ENCODE measurements at regions of chr3 and their contacts with region 1.

Region 1: GRCh38 chr3:44510000-44510368 is 32.5 kb upstream of the ZNF445 start:
- DNase-seq: no peak
- H3K4me3 Mint-ChIP-seq: peak overlapping the region; percentile 88
- H3K27ac Mint-ChIP-seq: peak overlapping the region; percentile 79
- H3K4me1 Mint-ChIP-seq: peaks cover 24% of the 10 kb centered on the region
- H3K27me3 Mint-ChIP-seq: no peaks in the 10 kb centered on the region

Region 2: GRCh38 chr3:44323341-44323955 is 186.5 kb before region 1 on chr3:
- intact Hi-C with region 1: loop called (anchors 5 kb)
- DNase-seq: peak; percentile 85
- H3K4me3 Mint-ChIP-seq: no peak overlapping the region
- H3K27ac Mint-ChIP-seq: no peak overlapping the region
- H3K4me1 Mint-ChIP-seq: no peaks in the 10 kb centered on the region
- H3K27me3 Mint-ChIP-seq: peaks cover 31% of the 10 kb centered on the region

Region 3: GRCh38 chr3:44439499-44440295 is 70.3 kb before region 1 on chr3:
- intact Hi-C with region 1: loop called (anchors 1 kb)
- DNase-seq: peak; percentile 90
- H3K4me3 Mint-ChIP-seq: peak overlapping the region; percentile 66
- H3K27ac Mint-ChIP-seq: peak overlapping the region; percentile 85
- H3K4me1 Mint-ChIP-seq: peaks cover 38% of the 10 kb centered on the region
- H3K27me3 Mint-ChIP-seq: no peaks in the 10 kb centered on the region

Region 4: GRCh38 chr3:44477312-44478030 is 32.5 kb before region 1 on chr3 and contains the start of gene ZNF445:
- intact Hi-C with region 1: loop called (anchors 1 kb)
- DNase-seq: peak; percentile 94
- H3K4me3 Mint-ChIP-seq: peak within 1 kb of the TSS; percentile 94
- H3K27ac Mint-ChIP-seq: peak within 1 kb of the TSS; percentile 90
- H3K4me1 Mint-ChIP-seq: peaks cover 21% of the 10 kb centered on the region
- H3K27me3 Mint-ChIP-seq: no peaks in the 10 kb centered on the region
- total RNA-seq, gene ZNF445: 17.7 and 19.8 TPM in 2 replicates

Region 5: DNA sequence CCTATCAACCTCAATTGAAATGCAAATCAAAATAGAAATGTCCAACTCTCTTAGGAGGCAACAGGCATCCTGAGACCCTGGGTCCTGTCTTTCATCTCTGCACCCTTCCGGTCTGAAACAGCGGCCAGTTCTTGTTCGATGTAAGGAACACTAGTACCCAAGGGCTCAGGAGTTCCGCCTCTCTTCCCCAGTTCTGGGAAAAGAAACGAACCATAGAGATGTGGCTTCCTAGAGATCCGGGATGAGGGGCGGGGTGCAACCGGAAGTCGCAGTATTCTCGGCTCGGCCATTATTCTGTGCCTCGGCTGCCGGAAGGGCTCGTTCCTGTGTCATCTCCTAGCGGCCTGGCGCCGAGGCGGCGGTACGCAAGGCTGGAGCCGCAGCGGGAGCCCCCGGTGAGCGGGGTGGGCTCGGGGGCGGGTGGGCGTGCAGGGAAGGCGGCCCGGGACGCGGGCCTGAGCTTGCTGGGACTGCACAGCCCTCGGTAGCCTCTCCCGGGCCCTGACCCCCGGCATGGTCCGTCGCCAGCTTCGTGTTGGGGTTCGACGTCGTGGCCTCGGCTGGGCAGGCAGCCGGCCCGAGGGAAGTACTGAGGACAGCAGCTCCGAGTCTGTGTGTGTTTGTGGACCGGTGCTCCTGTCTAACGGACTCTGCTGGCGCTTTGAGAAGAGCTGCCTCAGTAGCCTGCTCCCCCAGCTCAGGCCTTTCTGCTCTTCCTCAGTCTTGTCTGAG is 114.9 kb after region 1 on chr3 and contains the start of gene ZNF197:
- intact Hi-C with region 1: loop called (anchors 10 kb)
- DNase-seq: peak; percentile 88
- H3K4me3 Mint-ChIP-seq: peak within 1 kb of the TSS; percentile 90
- H3K27ac Mint-ChIP-seq: peak within 1 kb of the TSS; percentile 81
- H3K4me1 Mint-ChIP-seq: peaks cover 14% of the 10 kb centered on the region
- H3K27me3 Mint-ChIP-seq: no peaks in the 10 kb centered on the region
- total RNA-seq, gene ZNF197: 10.5 and 10.7 TPM in 2 replicates